Posterior vena cava (tissue), 2 donors: ENCODE measurements at regions of chr4 and their contacts with region 1.

Region 1: GRCh38 chr4:13577660-13578059 is 33.4 kb upstream of the NKX3-2 start:
- DNase-seq: no peak

Region 2: DNA sequence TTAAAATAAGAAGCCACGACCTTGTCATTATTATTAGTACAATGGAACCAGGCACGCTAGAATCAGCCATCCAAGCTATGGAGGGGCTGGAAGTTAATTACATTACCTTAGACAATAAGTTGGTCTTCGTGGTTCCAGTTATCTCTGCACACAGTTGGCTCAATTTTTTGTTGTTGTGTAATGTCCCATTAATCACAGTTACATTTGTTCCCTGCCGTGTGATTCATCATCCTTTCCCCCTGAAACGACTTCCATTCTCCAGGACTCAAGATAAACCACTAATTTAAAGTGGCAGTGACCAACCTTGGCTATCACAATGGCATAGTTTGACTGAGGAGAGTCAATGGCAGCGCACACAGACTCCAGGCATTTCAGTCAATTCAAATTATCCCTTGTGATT is 998.5 kb before region 1 on chr4:
- intact Hi-C with region 1: no loop called
- DNase-seq: no peak

Region 3: GRCh38 chr4:13611283-13611842 is 33.7 kb after region 1 on chr4:
- intact Hi-C with region 1: loop called in 1 of 2 experiments (anchors 2 kb)
- DNase-seq: no peak